Activated T-helper 1 cell treated with anti-CD3 and anti-CD28 coated beads, Interleukin-12 subunit alpha, Interleukin-12 subunit beta, Interleukin-2, Interleukin-4 antibody, amounts not matched to agents 30 ng/mL and 10 ng/mL and 1 ng/mL, durations not matched to agents 14 hours and 24 hours and 36 hours (primary cell): ENCODE measurements at regions of chr13 and their contacts with region 1.

Region 1: GRCh38 chr13:46796515-46797474 is at the start of gene ESD:
- DNase-seq: peak; percentile 83
- H3K4me3 Mint-ChIP-seq: peak within 1 kb of the TSS; percentile 93
- H3K27ac Mint-ChIP-seq: peak within 1 kb of the TSS; percentile 95
- H3K4me1 Mint-ChIP-seq: peaks cover 36% of the 10 kb centered on the region
- H3K27me3 Mint-ChIP-seq: peaks cover 7% of the 10 kb centered on the region
- total RNA-seq, gene ESD: 96.8 and 102 TPM in 2 replicates

Region 2: GRCh38 chr13:46176756-46177155 is 620.0 kb before region 1 on chr13:
- intact Hi-C with region 1: loop called (anchors 10 kb)
- DNase-seq: no peak
- H3K4me3 Mint-ChIP-seq: peak overlapping the region; percentile 97
- H3K27ac Mint-ChIP-seq: peak overlapping the region; percentile 86
- H3K4me1 Mint-ChIP-seq: peaks cover 73% of the 10 kb centered on the region
- H3K27me3 Mint-ChIP-seq: no peaks in the 10 kb centered on the region

Region 3: DNA sequence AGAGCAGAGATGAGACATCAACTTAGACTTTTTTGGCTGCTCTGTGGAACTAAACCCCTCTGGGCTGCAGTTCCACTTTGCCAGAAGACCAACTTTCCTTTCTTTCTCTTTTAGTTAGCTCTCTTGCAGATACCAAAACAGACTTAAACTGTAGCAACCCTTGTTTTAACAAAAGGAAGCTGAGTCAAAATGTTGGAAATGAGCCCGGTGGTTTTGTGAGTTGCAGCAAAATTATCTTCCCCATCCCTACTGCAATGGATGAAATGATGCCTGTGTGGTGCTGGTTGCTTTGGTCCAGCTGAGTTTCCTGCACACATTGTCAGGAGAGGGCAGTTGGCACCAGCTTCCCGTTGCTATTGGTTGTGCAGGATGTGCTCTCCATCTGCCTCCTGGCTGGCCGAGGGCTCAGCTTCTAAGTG is 128.5 kb before region 1 on chr13:
- intact Hi-C with region 1: loop called (anchors 5 kb)
- DNase-seq: peak; percentile 18
- H3K4me3 Mint-ChIP-seq: peak overlapping the region; percentile 79
- H3K27ac Mint-ChIP-seq: peak overlapping the region; percentile 87
- H3K4me1 Mint-ChIP-seq: peaks cover 63% of the 10 kb centered on the region
- H3K27me3 Mint-ChIP-seq: no peaks in the 10 kb centered on the region

Region 4: DNA sequence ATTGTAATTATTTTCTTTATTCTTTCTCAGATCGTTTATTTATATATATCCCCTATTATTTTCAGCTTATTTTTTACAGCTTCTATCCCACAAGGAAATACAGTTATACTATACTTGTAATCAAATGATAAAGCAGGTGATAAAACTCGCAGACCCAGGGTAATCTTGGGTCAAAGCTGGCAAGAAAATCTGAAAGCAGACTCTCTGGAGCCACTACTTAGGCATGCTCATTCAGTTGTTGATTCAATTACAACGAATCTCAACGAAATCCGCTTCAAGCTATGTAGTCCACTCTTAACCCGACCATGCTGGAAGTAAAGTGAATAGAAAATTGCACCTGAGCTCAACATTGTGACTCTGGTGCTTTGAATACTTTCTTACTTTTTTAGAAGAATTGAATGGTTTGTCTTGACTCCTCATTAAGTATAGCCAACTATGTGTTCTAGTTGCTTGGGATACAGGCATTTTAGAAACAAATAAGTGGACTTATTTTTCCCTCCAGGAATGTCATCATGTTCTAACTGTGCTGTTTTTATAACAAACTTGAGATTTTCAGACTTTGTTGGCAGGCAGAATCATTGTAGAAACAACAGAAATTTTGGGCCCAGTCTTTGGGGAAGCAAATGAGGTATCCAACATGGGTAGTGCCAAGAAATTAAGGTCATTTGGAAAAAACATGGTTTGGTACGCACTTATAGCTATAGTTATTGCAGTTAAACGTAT is 21.2 kb before region 1 on chr13:
- intact Hi-C with region 1: loop called (anchors 2 kb)
- DNase-seq: no peak
- H3K4me3 Mint-ChIP-seq: no peak overlapping the region
- H3K27ac Mint-ChIP-seq: no peak overlapping the region
- H3K4me1 Mint-ChIP-seq: no peaks in the 10 kb centered on the region
- H3K27me3 Mint-ChIP-seq: no peaks in the 10 kb centered on the region